ENCODE measurements at regions of chr2 and their contacts with region 1.

Region 1: DNA sequence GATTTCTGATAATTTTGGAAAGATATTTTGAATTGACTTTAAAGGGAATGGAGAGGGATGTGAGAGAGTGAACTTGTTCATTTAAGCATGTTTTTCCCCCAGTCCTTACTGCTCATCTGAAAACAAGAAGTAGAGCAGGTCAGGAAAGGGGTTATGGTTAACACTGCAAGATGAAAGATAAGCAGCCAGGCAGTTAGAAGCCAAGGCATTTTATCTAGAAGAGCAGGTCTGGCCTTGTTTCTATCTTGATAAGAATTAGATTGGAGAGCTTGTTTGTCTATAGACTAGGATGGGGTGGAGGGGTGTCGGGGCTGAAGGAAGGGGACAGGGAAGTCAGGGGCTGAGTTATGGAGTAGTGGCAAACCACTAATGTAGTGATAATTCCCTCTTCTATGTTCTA is 171.6 kb downstream of the IKZF2 start:
- DNase-seq: no peak
- ATAC-seq: no peak
- H3K4me3 Mint-ChIP-seq: no peak overlapping the region
- H3K27ac Mint-ChIP-seq: no peak overlapping the region
- H3K4me1 Mint-ChIP-seq: peaks cover 3% of the 10 kb centered on the region
- H3K27me3 Mint-ChIP-seq: no peaks in the 10 kb centered on the region
- CTCF ChIP-seq: no peak

Region 2: DNA sequence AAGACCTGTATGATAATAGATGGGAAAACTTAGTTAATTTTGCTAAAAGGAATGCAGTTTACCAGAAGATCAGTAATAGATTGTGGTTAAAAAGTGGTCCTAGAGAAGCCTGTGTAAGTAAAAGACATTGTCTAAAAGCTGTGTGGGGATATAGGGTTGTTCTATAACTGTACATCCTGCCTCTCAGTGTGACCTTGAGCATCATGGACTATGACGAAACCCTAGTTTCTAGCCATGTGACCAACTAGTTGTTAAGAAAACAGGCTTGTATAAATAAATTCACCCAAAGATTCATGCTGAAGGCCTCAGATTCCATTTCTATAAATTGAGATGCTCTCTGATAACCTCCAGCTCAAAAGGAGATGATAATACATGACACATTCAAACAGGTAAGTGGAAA is 10.9 kb after region 1 on chr2:
- CTCF ChIA-PET with region 1: no interaction called
- POLR2A ChIA-PET with region 1: interaction called, 3 read pairs
- intact Hi-C with region 1: loop called (anchors 2 kb)
- DNase-seq: no peak
- ATAC-seq: no peak
- H3K4me3 Mint-ChIP-seq: no peak overlapping the region
- H3K27ac Mint-ChIP-seq: peak overlapping the region; percentile 51
- H3K4me1 Mint-ChIP-seq: peaks cover 10% of the 10 kb centered on the region
- H3K27me3 Mint-ChIP-seq: no peaks in the 10 kb centered on the region
- CTCF ChIP-seq: no peak

Region 3: DNA sequence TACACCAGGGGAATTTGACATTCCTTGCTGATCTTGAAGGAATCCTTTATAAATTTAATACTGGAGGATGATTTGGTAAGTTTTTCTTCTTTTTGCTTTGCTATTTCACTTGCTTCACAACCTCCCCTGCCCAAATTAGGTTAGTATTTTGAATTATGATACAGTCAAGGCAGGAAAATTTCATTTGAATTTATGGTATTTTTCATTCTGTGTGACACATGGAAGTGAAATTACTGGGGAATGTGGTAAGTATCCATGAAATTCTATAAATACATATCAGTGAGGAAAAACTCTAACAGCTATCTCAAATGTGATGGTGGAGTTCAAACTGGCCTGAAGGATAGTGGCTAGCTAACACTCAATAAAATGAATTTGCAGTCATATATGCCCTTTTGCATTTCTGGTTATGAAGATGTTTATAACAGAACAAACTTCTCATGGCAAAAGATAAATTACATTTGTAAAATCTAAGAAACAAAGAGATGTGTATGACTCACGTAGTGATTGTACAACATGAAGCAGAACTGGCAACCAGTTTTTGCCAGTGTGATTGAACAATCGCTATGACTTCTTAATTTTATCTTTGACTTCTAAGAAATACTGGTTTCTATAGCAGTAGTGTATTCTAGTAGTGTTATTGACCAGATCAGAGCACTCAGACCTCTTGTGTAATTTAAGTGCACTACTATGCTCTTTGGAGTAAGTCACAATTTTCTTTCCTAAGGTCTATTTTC is 19.0 kb after region 1 on chr2:
- CTCF ChIA-PET with region 1: no interaction called
- POLR2A ChIA-PET with region 1: no interaction called
- intact Hi-C with region 1: loop called (anchors 2 kb)
- DNase-seq: no peak
- ATAC-seq: no peak
- H3K4me3 Mint-ChIP-seq: no peak overlapping the region
- H3K27ac Mint-ChIP-seq: no peak overlapping the region
- H3K4me1 Mint-ChIP-seq: peaks cover 18% of the 10 kb centered on the region
- H3K27me3 Mint-ChIP-seq: no peaks in the 10 kb centered on the region
- CTCF ChIP-seq: no peak

Measured in activated B cell treated with CpG ODN at 0.5 μM for 24 hours (primary cell).